Activated naive CD4-positive, alpha-beta T cell treated with anti-CD3 and anti-CD28 coated beads for 36 hours (primary cell): ENCODE measurements at regions of chr15 and their contacts with region 1.

Region 1: DNA sequence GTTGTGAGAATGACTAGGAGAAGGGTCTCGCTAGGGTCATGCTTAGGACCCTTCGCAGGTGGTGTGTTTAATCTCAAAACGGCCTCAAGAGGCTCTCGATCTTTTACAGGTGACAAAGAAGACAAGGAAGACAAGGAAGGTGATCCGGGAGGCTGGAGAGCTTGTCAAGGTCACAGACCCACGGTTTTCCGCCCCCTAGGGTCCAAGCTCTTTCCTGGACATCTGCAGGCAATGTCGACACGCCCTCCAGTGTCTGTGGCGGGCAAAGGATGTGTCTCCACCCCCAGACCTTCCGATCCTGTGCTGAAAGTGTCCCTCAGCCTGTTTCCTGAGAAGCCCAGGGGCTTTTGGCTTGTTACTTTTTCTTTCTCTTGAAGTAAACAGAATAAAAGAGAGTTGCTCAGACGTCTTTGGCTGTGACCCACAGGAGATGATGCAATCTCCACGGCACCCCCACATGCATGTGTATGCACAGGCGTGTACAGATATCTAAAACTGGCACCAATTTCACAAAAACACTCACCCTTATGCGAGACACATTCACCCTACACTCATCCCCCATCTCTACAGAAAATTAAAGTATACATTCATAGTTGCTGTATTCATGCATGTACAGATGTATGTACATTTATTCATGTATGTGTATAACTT is 108.8 kb downstream of the KLF13 start:
- DNase-seq: peak; percentile 93
- H3K4me3 Mint-ChIP-seq: peak overlapping the region; percentile 61
- H3K27ac Mint-ChIP-seq: peak overlapping the region; percentile 95
- H3K4me1 Mint-ChIP-seq: peaks cover 69% of the 10 kb centered on the region
- H3K27me3 Mint-ChIP-seq: no peaks in the 10 kb centered on the region

Region 2: DNA sequence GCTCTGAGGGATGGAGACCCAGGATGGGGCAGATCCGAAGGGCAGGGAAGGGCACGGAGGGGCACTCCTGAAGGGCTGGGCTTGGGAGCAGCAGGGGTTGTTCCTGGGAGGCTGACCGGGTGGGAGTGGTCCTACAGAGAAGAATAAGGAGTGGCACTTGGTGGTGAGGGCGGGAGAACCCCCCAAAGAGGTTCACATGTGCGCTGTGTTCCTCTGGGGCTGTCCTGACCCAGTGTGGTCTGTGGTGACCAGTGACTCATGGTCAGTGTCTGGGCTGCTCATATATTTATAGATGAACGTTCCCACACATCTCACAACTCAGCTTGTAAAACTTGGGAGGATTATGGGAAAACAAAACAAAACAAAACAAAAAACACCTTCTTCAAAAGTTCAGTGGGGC is 343.9 kb before region 1 on chr15:
- CTCF ChIA-PET with region 1: no interaction called
- intact Hi-C with region 1: no loop called
- DNase-seq: no peak
- H3K4me3 Mint-ChIP-seq: no peak overlapping the region
- H3K27ac Mint-ChIP-seq: no peak overlapping the region
- H3K4me1 Mint-ChIP-seq: no peaks in the 10 kb centered on the region
- H3K27me3 Mint-ChIP-seq: no peaks in the 10 kb centered on the region

Region 3: DNA sequence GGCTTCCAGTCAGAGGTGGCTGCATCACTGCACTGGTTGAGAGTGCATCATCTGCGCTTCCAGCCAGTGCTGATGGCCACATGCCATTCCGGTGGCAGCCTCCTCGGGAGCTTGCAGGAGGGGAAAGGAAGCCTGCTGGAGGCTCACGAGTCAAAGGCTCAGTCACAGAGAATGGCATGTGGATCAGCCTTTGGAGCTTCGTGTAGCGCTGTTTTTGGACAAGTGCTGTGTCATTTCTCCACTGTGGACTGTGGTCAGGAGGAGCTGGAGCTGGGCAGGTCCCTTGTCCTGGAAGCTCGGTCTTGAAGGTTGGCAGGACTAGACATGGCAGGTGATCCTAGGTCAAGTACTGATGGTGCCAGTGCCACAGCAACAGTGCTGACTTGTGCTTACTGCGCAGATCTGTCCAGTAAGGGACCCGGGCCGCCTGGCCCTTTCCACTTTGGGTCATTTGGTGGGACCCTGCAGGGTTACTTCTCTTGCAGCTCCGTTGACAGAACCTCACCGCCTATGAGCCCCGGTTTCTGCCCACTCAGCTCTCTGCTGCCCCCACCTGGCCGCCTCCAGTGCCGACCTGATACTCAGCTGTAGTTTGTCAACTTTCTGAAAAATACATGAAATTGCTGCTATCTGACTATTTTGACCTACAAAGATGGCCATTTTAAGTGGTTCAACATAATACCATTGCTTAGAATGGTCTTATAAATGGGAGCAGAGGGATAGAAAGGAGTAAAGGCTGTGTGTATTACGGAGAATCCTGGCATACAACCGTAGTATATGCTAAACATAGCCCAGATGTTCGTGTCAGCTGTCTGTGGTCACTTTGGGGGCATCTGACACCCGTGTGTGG is 306.2 kb before region 1 on chr15:
- CTCF ChIA-PET with region 1: no interaction called
- intact Hi-C with region 1: loop called (anchors 5 kb)
- DNase-seq: peak; percentile 84
- H3K4me3 Mint-ChIP-seq: no peak overlapping the region
- H3K27ac Mint-ChIP-seq: no peak overlapping the region
- H3K4me1 Mint-ChIP-seq: no peaks in the 10 kb centered on the region
- H3K27me3 Mint-ChIP-seq: no peaks in the 10 kb centered on the region

Region 4: GRCh38 chr15:31265871-31266711 is 169.3 kb before region 1 on chr15:
- CTCF ChIA-PET with region 1: interaction called, 7 read pairs
- intact Hi-C with region 1: loop called (anchors 1 kb)
- DNase-seq: peak; percentile 81
- H3K4me3 Mint-ChIP-seq: no peak overlapping the region
- H3K27ac Mint-ChIP-seq: peak overlapping the region; percentile 67
- H3K4me1 Mint-ChIP-seq: peaks cover 84% of the 10 kb centered on the region
- H3K27me3 Mint-ChIP-seq: no peaks in the 10 kb centered on the region

Region 5: GRCh38 chr15:31344823-31345605 is 90.4 kb before region 1 on chr15:
- CTCF ChIA-PET with region 1: interaction called, 7 read pairs
- intact Hi-C with region 1: loop called (anchors 1 kb)
- DNase-seq: peak; percentile 66
- H3K4me3 Mint-ChIP-seq: peak overlapping the region; percentile 92
- H3K27ac Mint-ChIP-seq: peak overlapping the region; percentile 99
- H3K4me1 Mint-ChIP-seq: peaks cover 98% of the 10 kb centered on the region
- H3K27me3 Mint-ChIP-seq: no peaks in the 10 kb centered on the region

Region 6: GRCh38 chr15:31391687-31392671 is 43.4 kb before region 1 on chr15:
- CTCF ChIA-PET with region 1: interaction called, 16 read pairs
- intact Hi-C with region 1: loop called (anchors 1 kb)
- DNase-seq: peak; percentile 85
- H3K4me3 Mint-ChIP-seq: peak overlapping the region; percentile 89
- H3K27ac Mint-ChIP-seq: no peak overlapping the region
- H3K4me1 Mint-ChIP-seq: peaks cover 29% of the 10 kb centered on the region
- H3K27me3 Mint-ChIP-seq: peaks cover 2% of the 10 kb centered on the region

Region 7: DNA sequence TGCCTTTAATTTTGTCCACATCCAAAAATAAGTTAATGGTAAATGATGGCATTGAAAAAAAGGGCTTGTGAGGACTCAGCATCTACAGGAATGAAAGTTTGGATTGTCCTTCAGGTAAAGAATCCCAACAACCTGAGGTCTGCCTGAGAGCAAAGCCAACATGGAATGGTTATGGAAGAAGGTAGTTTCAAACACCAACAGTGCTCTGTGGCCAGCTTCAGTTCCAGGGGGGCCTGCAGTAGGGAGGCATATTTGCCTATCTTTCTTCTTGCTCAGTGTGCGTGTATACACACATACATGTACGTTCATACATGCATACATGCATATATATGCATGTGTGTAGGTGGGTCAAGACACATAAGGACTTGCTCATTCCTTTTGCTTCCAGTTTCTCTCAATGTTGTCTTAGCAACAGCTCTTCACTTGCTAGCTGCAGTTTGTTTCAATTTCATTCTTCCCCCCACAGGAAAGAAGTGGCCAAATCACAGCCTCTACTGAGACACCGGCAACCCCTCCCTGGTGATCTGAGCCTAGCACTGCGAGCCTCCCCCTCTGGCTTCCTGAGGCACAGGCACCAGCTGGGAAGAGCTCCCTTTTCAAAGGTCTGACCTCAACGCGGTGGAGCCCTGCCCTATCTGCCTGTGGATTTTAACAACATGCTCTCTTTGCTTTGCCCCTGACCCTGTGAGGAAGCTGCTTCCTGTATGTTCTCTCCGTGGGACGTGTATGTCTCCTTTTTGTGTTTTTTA is 37.4 kb after region 1 on chr15:
- CTCF ChIA-PET with region 1: interaction called, 46 read pairs
- intact Hi-C with region 1: loop called (anchors 1 kb)
- DNase-seq: peak; percentile 81
- H3K4me3 Mint-ChIP-seq: peak overlapping the region; percentile 64
- H3K27ac Mint-ChIP-seq: peak overlapping the region; percentile 94
- H3K4me1 Mint-ChIP-seq: peaks cover 44% of the 10 kb centered on the region
- H3K27me3 Mint-ChIP-seq: no peaks in the 10 kb centered on the region

Region 8: DNA sequence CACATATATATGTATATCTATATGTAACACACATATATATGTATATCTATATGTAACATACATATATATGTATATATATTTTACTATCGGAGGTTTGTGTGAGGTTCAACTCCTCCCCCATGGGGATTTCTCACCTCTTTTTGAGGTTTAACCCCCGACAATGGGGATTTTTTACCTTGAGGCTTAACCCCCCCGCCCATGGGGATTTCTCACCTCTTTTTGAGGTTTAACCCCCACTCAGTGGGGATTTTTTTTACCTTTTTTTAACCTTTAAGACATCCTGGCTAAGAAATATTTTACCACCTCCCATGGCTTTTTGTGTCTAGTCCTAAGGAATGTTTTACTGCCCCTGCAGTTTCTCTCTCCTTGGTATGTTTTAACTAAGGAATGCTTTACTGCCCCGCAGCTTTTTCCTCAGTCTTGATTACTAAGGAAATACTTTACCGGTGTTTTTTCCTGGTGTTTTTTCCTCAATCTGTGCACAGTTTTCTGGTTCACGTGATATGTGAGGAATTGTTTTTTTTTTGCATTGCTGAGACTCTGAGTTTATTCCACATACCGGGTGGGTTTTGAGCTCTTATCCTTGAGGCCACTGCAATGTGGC is 76.4 kb after region 1 on chr15:
- CTCF ChIA-PET with region 1: no interaction called
- intact Hi-C with region 1: no loop called
- DNase-seq: peak; percentile 84
- H3K4me3 Mint-ChIP-seq: no peak overlapping the region
- H3K27ac Mint-ChIP-seq: no peak overlapping the region
- H3K4me1 Mint-ChIP-seq: peaks cover 15% of the 10 kb centered on the region
- H3K27me3 Mint-ChIP-seq: peaks cover 5% of the 10 kb centered on the region

Region 9: DNA sequence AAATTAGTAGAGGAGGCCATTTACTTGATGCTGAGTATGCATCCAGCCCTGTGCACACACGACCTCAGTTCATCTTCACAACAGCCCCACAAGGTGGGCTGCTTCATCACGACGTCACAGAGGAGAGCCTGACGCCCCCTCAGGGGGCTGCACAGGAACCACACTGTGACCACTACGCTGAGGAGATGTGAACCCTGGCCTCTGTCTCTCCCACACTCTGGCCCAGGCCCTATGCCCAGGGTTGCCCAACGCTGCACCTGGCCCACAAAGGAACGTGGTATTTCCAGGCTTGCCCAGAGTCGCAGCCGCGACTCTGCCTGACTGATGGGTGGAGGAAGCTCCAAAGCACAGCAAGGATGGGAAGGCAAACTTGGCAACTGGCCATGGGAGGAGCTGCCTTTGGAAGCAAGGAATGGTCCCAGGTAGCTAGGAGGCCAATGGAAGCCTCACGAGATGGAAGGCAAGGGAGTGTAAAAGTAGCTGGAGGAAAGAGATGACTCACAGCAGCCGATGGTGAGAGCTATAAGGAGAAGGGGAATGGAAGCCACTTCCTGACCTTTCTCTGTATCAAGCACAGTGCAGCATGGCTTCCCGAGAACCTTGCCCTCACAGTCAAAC is 117.2 kb after region 1 on chr15:
- CTCF ChIA-PET with region 1: no interaction called
- intact Hi-C with region 1: no loop called
- DNase-seq: no peak
- H3K4me3 Mint-ChIP-seq: no peak overlapping the region
- H3K27ac Mint-ChIP-seq: no peak overlapping the region
- H3K4me1 Mint-ChIP-seq: peaks cover 16% of the 10 kb centered on the region
- H3K27me3 Mint-ChIP-seq: peaks cover 10% of the 10 kb centered on the region

Region 10: GRCh38 chr15:31840849-31841476 is 405.6 kb after region 1 on chr15:
- CTCF ChIA-PET with region 1: no interaction called
- intact Hi-C with region 1: no loop called
- DNase-seq: no peak
- H3K4me3 Mint-ChIP-seq: no peak overlapping the region
- H3K27ac Mint-ChIP-seq: no peak overlapping the region
- H3K4me1 Mint-ChIP-seq: no peaks in the 10 kb centered on the region
- H3K27me3 Mint-ChIP-seq: peaks cover 2% of the 10 kb centered on the region

Region 11: DNA sequence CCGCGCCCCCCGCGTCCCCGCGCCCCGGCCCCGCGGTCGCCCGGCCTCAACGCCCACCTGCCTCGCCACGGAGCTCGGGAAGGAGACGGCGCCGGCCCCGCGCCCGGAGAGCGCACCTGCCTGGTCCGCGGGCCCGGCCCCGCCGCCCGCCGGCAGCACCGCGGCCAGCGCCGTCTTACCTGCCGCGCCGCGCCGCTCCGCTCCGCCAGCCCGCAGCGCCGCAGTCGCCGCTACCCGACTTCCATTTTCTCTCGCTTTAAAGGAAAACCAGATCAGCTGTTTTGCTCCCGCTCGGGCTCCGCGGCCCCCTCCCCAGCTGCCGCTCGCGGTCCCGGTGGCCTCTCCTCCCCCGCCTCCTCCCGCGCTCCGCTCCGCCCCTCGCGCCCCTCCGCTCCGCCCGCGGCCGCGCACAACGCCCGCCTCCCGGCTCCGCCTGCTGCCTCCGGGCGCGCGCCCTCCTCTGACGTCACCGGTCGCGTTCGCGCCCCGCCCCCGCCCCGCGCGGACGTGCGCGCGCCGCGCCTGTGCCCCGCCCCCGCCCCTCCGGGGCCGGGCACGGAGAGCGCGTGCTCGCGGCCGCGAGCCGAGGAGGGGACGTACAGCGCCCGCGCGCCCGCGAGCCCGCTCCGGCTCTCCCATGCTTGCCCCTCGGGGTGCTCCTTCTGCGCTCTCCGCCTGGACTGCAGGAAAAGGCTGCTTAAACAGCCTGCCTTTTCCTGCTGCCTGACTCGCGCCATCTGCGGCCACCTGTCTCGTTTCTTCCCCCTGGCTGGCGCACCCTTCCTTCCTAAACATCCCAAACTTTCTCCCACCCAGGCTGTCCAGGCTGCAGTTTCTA is 435.2 kb after region 1 on chr15:
- CTCF ChIA-PET with region 1: no interaction called
- intact Hi-C with region 1: loop called (anchors 5 kb)
- DNase-seq: peak; percentile 78
- H3K4me3 Mint-ChIP-seq: peak within 1 kb of the TSS; percentile 87
- H3K27ac Mint-ChIP-seq: peak within 1 kb of the TSS; percentile 80
- H3K4me1 Mint-ChIP-seq: peaks cover 9% of the 10 kb centered on the region
- H3K27me3 Mint-ChIP-seq: peaks cover 8% of the 10 kb centered on the region